Spleen (tissue), 13 donors: ENCODE measurements at regions of chr2 and their contacts with region 1.

Region 1: GRCh38 chr2:218257390-218257981 is 3.3 kb upstream of the GPBAR1 start:
- DNase-seq: no peak
- H3K4me3 ChIP-seq: no peak overlapping the region
- H3K27ac ChIP-seq: peak overlapping the region; percentile 28 to 82 (median 58)
- H3K4me1 ChIP-seq: peaks cover 18 to 68% (median 56%) of the 10 kb centered on the region in 6 donors
- H3K27me3 ChIP-seq: no peaks in the 10 kb centered on the region
- CTCF ChIP-seq: peak in 9 of 11 experiments; percentile 49 to 80 (median 66)
- POLR2A ChIP-seq: no peak

Region 2: GRCh38 chr2:218186355-218186766 is 71.1 kb before region 1 on chr2:
- intact Hi-C with region 1: loop called (anchors 5 kb)
- DNase-seq: peak; percentile 84
- H3K4me3 ChIP-seq: no peak overlapping the region
- H3K27ac ChIP-seq: no peak overlapping the region
- H3K4me1 ChIP-seq: peaks cover 0 to 10% (median 7%) of the 10 kb centered on the region in 6 donors
- H3K27me3 ChIP-seq: no peaks in the 10 kb centered on the region
- CTCF ChIP-seq: peak; percentile 76 to 94 (median 89)
- POLR2A ChIP-seq: no peak

Region 3: GRCh38 chr2:218892693-218893348 is 635.3 kb after region 1 on chr2:
- intact Hi-C with region 1: no loop called
- DNase-seq: peak; percentile 97
- H3K4me3 ChIP-seq: peak overlapping the region in 7 of 8 donors; percentile 25 to 71 (median 40)
- H3K27ac ChIP-seq: peak overlapping the region; percentile 22 to 90 (median 82)
- H3K4me1 ChIP-seq: peaks cover 24 to 65% (median 56%) of the 10 kb centered on the region in 6 donors
- H3K27me3 ChIP-seq: peaks cover 0 to 63% (median 18%) of the 10 kb centered on the region in 7 donors
- CTCF ChIP-seq: peak in 8 of 11 experiments; percentile 25 to 73 (median 60)
- POLR2A ChIP-seq: no peak